ENCODE measurements at regions of chr1 and their contacts with region 1.

Region 1: DNA sequence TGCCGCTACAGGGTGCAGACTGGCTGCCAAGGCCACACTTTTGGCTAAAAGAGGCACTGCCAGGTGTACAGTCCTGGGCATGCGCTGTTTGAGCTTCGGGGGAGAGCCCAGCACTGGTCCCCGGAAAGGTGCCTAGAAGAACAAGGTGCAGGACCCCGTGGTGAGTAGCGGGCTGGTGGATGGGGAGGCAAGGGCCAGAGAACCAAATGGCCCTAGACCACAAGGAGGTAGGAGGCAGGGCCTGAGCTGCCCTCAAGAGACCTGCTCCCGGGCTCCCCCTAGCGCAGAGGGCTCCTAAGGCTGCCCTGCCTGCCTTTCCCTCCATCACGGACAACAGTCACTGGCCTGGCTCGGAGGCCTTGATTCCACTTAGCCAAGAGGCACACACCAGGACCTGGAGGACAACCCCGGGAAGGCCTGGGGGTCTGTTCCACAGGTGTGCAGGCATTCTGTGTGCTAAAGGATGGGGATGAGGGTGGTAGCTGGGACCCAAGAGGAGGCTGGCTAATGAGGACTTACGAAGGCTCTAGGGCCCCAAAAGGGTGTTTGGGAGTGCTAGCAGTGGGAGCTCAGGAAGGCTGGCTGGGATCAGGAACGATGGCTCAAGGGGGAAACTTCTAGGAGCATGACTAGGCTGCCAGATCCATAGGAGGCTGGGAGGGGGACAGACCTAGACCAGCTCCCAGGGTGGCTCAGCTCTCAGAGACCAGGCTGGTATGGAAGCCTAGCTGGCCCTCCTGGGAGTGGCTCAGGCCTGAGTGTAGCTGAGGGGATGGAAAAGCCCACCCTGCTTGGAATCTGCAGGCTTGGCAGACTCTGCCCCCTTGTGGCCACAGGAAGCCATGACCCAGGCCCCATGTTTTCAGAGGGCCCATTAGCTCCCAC is 742 bp downstream of the ARTN start:
- DNase-seq: peak; percentile 52 to 82 (median 60)
- ATAC-seq: peak in 3 of 4 donors; percentile 51 to 73 (median 66)
- H3K4me3 ChIP-seq: peak overlapping the region in 6 of 12 donors; percentile 33 to 46 (median 41)
- H3K27ac ChIP-seq: no peak overlapping the region
- H3K4me1 ChIP-seq: peaks cover 3 to 32% (median 19%) of the 10 kb centered on the region in 12 donors
- H3K27me3 ChIP-seq: peaks cover 3 to 23% (median 9%) of the 10 kb centered on the region in 9 donors
- CTCF ChIP-seq: peak; percentile 77 to 88 (median 80)
- POLR2A ChIP-seq: no peak

Region 2: DNA sequence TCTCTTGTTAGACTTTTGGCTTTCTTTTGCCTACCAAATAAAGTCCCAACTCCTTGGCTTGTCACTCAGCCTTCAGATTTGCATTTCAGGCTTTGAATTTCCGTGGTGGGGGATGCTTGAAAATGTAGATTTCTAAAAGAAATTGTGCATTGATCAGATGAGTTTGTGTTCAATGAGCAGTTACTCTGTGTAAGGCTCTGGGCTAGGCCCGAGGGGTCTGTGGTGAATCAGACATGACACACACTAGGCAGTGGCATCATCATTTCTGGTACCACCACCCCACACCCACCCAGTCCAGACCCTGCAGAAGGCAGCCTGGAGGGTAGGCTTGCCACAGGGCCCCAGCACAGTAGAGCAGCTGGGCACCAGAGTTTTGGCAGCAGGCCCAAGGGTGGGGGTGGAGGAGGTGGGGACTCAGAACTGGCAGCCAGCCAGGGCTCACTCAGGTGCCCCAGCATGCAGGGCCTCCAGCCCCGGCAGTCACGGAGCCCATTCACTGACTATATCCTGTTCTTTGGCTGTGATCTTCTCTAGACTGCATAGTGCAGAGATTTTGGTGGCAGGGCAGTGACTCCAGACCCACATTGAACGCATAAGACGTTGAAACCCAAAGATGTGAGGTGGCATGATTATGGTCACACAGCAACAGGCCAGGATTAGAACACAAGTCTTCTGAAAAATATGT is 97.9 kb before region 1 on chr1:
- intact Hi-C with region 1: loop called in 1 of 10 experiments (anchors 5 kb)
- DNase-seq: peak; percentile 59 to 79 (median 67)
- ATAC-seq: peak; percentile 59 to 86 (median 71)
- H3K4me3 ChIP-seq: no peak overlapping the region
- H3K27ac ChIP-seq: no peak overlapping the region
- H3K4me1 ChIP-seq: peaks cover 0 to 57% (median 21%) of the 10 kb centered on the region in 12 donors
- H3K27me3 ChIP-seq: no peaks in the 10 kb centered on the region
- CTCF ChIP-seq: no peak
- POLR2A ChIP-seq: no peak

Region 3: GRCh38 chr1:43868741-43869067 is 65.6 kb before region 1 on chr1:
- intact Hi-C with region 1: no loop called
- DNase-seq: peak in 4 of 5 donors; percentile 70 to 86 (median 73)
- ATAC-seq: peak; percentile 84 to 91 (median 85)
- H3K4me3 ChIP-seq: no peak overlapping the region
- H3K27ac ChIP-seq: peak overlapping the region in 10 of 12 donors; percentile 38 to 81 (median 61)
- H3K4me1 ChIP-seq: peaks cover 0 to 57% (median 28%) of the 10 kb centered on the region in 12 donors
- H3K27me3 ChIP-seq: no peaks in the 10 kb centered on the region
- CTCF ChIP-seq: no peak
- POLR2A ChIP-seq: no peak

Region 4: DNA sequence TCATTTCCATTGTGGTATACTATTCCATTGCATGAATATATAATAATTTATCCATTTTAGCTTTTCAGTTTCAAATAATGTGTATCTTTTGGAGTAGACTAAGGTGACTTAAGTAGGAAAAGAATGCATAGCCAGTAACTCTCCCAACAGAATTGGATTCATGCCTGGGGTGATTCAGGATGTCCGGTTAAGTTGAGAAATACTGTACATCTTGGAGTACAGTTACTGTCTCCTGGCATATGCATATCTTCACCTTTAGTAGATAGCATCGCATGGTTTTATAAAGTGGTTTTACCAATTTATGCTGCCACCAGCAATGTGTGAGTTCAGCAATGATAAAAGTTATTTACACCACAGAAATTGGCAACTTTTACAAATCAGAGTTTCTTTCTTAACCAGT is 115.5 kb after region 1 on chr1:
- intact Hi-C with region 1: loop called in 2 of 10 experiments (anchors 10 kb)
- DNase-seq: no peak
- ATAC-seq: no peak
- H3K4me3 ChIP-seq: no peak overlapping the region
- H3K27ac ChIP-seq: peak overlapping the region in 1 of 12 donors; percentile 54
- H3K4me1 ChIP-seq: peaks cover 0 to 33% (median 0%) of the 10 kb centered on the region in 12 donors
- H3K27me3 ChIP-seq: no peaks in the 10 kb centered on the region
- CTCF ChIP-seq: no peak
- POLR2A ChIP-seq: no peak

Measured in heart left ventricle (tissue), 16 donors.